RWPE1 (cell line): ENCODE measurements at regions of chr12 and their contacts with region 1.

Region 1: GRCh38 chr12:115866909-115867525 is 410.5 kb downstream of the MED13L start:
- DNase-seq: peak; percentile 54
- H3K27ac ChIP-seq: no peak overlapping the region
- CTCF ChIP-seq: no peak

Region 2: DNA sequence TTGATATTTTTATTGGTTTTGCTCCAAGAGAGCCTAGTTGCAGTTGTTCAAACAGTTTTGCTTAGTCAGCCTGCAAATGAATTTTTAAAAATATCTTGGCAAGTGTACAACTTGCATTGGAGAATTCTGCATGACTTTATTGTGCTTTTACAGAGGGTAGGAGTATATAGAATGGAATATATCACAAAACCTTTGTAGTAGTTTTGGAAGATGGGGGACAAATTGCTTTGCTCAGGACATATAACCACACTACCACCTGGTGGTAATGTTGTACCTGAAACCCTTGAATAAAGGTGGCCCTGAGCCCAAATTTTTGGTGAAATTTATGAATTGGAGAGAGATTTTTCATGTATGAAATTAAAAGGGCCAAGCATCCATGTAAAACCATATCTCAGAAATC is 234.7 kb before region 1 on chr12:
- CTCF ChIA-PET with region 1: no interaction called
- POLR2A ChIA-PET with region 1: no interaction called
- DNase-seq: peak; percentile 27
- H3K27ac ChIP-seq: no peak overlapping the region
- CTCF ChIP-seq: peak; percentile 32; the same call in 1 of the 2 replicates

Region 3: DNA sequence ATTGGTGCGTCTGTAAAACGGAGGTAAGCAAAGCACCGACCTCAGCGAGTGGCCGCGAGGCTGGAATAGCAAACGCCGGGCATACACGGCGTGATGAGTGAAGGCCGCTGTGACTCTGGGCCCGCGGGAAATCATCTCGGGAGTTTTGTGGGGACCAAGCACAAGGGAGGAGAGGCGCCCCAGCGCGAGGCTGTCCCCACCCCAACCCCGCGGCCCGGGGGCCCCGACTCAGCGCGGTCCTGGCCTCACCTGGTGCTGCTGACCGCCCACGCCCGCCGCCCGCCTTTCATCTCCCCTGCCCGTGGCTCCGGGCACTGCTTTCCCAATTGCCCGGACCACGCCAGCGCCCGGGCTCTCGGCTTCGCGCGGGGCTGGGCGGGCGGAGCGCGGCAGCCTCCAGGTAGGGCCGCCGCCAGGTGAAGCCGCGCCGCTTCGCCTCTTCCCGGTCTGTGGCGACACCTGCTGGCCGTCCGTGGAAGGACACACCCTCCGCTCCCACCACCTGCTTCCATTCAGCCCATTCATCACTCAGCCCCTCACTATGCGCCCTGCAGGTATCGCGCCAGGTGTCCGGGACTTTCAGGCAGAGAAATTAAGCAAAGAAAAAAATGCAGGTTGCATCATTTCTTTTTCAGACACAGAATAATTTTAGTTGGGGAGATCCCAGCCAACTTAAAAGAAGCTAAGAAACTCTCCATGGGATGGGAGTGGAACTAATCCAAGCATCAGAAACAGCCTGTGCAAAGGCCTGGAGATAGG is 50.1 kb after region 1 on chr12:
- CTCF ChIA-PET with region 1: interaction called, 22 read pairs
- POLR2A ChIA-PET with region 1: no interaction called
- DNase-seq: peak; percentile 74
- H3K27ac ChIP-seq: no peak overlapping the region
- CTCF ChIP-seq: peak; percentile 90